Posterior vena cava (tissue), 2 donors: ENCODE measurements at regions of chr17 and their contacts with region 1.

Region 1: GRCh38 chr17:21214015-21214776 is at the start of gene TMEM11:
- DNase-seq: peak; percentile 99
- total RNA-seq, gene TMEM11: 18.5 to 18.7 TPM

Region 2: DNA sequence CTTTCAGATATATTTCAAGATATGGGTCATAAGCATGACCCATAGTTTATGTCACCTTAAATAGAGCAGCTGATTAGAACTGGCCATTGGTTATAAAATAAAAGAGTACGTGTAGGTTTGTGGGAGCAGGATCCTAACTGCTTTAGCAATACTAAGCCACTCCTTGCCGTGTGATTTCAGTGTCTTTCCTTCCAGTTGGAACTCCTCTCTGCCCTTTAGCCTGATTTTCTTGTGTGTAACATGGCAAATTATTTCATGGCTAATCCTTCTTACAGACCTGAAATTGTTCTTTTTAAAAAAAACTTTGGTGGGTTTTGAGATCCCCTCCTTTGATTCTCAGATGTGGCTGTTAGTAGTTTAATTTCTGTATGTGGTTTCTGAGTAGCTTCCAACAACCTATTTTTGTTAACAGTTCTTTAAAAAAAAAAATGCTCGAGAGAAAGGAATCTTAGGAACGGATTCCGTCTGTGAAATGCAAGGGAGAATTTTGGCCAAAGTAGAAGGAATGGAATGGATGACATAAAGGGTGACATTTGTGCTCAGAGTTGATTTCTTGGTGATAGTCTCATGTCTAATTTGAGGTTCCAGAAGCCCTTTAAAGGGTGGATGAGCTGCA is 47.5 kb before region 1 on chr17:
- intact Hi-C with region 1: loop called in 1 of 2 experiments (anchors 5 kb)
- DNase-seq: no peak

Region 3: DNA sequence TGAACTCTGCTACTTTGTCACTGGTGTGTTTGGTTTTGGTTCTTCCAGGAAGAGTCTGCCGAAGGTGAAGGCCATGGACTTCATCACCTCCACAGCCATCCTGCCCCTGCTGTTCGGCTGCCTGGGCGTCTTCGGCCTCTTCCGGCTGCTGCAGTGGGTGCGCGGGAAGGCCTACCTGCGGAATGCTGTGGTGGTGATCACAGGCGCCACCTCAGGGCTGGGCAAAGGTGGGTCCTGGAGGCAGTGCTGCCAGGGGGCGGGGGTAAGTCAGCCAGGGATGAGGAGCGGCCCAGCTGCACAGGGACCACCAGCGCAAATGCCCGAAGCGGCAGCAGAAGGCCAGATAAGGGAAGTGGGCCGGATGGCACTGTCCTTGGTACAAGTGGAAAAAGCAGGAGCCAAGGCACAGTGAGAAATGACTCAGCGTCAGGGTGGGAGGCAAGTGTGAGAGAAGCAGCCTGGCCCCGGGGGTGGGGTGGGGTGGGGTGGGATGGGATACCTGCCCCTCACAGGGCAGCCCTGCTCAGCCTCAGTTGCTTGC is 42.2 kb before region 1 on chr17:
- intact Hi-C with region 1: loop called (anchors 1 to 5 kb)
- DNase-seq: no peak